ENCODE measurements at regions of chr9 and their contacts with region 1.

Region 1: GRCh38 chr9:18442629-18443491 is 31.1 kb upstream of the ADAMTSL1 start:
- DNase-seq: peak in 1 of 2 donors; percentile 83
- H3K4me3 ChIP-seq: peak overlapping the region in 1 of 2 donors; percentile 26
- H3K27ac ChIP-seq: peak overlapping the region; percentile 26 to 35
- H3K4me1 ChIP-seq: peaks cover 0 to 12% of the 10 kb centered on the region in 2 donors
- H3K27me3 ChIP-seq: no peaks in the 10 kb centered on the region
- CTCF ChIP-seq: peak; percentile 53 to 88 (median 88)

Region 2: DNA sequence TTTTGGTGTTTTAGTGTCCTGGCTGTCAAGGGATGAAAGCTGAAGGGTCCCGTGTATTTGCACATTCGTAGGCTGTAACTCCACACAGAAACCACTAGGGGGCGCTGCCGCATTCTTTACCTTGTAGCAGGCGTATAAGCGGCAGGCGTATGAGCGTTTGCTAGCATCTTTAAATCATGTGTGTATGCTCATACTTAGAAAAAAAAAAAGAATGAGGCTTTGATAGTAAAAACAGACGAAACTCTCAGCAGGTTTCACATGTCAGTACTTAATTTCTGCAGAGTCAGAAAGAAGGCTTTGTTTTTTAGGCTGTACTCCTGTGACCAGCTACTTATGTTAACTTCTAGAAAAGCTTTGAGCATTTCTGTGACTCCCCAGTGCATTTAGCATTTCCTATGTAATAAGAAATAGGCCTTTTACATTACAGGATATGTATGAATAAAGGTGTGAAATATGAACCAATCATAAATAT is 187.7 kb before region 1 on chr9:
- intact Hi-C with region 1: loop called (anchors 2 kb)
- DNase-seq: peak; percentile 16 to 81
- H3K4me3 ChIP-seq: no peak overlapping the region
- H3K27ac ChIP-seq: no peak overlapping the region
- H3K4me1 ChIP-seq: peaks cover 0 to 2% of the 10 kb centered on the region in 2 donors
- H3K27me3 ChIP-seq: no peaks in the 10 kb centered on the region
- CTCF ChIP-seq: peak; percentile 67 to 95 (median 95)

Region 3: DNA sequence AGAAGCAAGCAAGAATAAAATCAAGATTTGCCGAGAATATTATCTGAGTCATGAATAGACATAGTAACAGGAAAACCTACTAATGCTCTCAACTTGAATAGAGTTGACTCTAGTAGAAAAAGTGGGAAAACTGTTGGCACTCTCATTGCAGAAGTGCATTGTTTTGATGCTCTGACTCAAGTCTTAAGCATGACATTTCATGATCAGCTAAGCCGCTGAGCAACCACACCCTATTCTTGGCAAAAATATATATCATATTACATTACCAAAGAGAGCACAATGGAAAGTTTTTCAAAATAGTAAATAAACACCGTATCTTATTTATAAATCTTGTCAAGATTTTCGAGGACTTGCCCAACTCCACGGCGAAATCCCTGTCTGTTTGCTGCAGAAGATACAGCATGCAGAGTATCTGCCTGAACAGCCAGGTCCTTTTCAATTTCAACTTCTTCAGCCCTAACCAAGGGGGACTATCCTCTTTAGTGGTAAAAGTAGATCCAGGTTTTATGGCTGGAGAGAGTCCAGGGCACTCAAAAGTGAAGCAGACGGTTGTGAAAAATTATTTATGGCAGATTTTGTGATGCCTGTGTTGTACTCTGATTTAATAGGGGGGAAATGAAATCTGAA is 17.2 kb after region 1 on chr9:
- intact Hi-C with region 1: no loop called
- DNase-seq: no peak
- H3K4me3 ChIP-seq: no peak overlapping the region
- H3K27ac ChIP-seq: no peak overlapping the region
- H3K4me1 ChIP-seq: no peaks in the 10 kb centered on the region
- H3K27me3 ChIP-seq: no peaks in the 10 kb centered on the region
- CTCF ChIP-seq: no peak

Region 4: DNA sequence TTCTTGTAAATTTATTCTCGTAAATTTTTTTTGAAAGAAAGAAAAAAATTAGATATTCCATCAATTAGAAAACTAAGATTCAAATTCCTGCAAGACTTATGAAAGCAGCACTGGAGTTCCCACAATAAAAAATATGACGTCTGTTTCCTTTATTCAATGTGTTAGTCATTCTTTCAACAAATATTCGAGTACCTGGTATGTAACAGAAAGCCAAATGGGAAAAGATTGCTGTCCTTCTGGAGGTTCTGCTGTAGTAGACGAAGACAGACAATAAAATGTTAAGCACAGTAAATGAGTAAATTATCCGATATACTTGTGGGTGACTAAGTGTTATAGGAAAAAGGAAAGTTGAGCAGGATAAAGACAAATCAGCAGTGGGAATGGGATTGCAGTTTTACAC is 123.3 kb after region 1 on chr9:
- intact Hi-C with region 1: loop called (anchors 10 kb)
- DNase-seq: no peak
- H3K4me3 ChIP-seq: no peak overlapping the region
- H3K27ac ChIP-seq: peak overlapping the region; percentile 2 to 66
- H3K4me1 ChIP-seq: peaks cover 0 to 14% of the 10 kb centered on the region in 2 donors
- H3K27me3 ChIP-seq: no peaks in the 10 kb centered on the region
- CTCF ChIP-seq: no peak

Region 5: DNA sequence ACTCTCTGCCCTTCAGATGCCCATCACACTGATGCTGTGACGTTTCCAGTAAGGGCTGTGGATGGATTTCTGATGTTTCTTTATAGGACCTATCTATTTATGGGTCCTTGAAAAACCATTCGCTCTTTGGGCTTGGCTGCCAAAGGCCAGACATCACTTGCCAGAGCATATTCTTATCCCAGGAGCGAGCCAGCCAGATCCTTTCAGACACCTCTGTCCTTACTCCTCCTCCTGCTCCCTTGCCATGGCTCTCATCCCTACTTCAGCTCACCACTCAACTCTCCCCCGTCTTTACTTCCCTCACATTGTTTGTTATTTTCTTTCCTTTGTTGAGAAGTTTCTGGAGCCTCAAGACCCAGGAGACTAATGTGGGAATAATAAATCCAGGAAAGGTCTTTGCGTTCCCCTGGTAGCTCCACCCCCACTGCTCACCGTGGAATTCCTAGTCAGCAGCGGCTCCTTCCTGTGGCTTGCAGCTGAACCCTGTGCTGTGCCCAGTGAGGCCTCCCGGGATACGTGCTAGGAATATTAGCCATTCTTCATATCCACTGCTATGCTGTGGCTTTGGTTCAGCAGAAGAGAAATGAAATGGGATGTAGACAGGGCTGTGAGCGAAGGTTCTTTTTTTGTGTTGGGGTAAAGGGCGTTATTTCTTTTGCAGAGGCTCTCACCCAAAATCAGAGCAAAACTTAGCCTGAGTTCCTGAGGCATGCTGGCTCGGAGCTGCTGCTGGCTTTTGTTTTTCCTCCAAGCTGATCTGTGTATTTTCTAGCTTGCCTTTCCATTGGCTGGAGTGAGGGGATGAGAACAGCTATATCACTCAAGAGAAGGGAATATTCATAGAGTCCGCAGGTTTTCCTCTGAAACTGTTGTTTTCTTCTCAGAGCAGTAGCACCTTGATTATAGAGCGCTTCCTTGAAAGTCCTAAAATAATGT is 419.0 kb after region 1 on chr9:
- intact Hi-C with region 1: loop called (anchors 5 kb)
- DNase-seq: peak in 1 of 2 donors; percentile 78
- H3K4me3 ChIP-seq: peak overlapping the region; percentile 1 to 9
- H3K27ac ChIP-seq: peak overlapping the region; percentile 71 to 82
- H3K4me1 ChIP-seq: peaks cover 0 to 20% of the 10 kb centered on the region in 2 donors
- H3K27me3 ChIP-seq: no peaks in the 10 kb centered on the region
- CTCF ChIP-seq: peak in 1 of 3 experiments; percentile 43

Region 6: DNA sequence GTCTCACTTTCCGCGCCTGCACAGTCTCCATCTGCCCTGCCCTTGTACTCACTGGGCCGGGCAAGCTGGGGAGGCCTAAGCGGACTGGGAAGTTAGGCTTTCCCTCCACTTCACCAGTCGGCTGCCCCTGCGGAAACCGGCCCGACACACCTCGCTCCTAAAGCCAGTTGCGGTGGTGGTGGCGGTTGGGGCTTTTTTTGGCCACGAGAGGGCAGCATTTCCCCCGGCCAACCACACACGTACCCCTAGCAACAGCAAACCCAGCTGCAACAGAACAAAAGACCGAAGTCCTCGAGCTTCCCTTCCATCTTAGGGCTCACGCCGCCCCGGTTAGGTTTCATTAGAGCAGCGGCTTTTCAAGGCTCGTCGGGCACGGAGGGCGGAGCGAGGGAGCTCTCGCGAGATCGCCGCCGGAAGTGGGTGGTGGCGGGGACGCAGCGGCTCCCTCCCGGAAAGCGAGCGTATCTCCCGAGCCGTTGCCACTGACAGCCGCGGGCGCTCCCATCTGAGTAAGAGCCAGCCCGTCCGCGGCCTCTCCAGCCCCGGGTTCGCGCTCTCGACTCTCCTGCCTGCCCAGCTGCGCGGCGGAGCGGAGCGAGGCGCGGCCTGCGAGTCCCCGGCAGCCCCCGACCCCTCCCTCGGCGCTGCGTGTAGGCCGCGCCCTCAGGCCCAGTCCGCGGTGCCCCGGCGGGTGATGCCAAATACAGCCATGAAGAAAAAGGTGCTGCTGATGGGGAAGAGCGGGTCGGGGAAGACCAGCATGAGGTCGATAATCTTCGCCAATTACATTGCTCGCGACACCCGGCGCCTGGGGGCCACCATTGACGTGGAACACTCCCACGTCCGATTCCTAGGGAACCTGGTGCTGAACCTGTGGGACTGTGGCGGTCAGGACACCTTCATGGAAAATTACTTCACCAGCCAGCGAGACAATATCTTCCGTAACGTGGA is 606.4 kb after region 1 on chr9 and contains the start of gene RRAGA:
- intact Hi-C with region 1: loop called (anchors 2 kb)
- DNase-seq: peak; percentile 70 to 97
- H3K4me3 ChIP-seq: peak within 1 kb of the TSS; percentile 77 to 89
- H3K27ac ChIP-seq: peak within 1 kb of the TSS; percentile 98
- H3K4me1 ChIP-seq: peaks cover 8 to 14% of the 10 kb centered on the region in 2 donors
- H3K27me3 ChIP-seq: no peaks in the 10 kb centered on the region
- CTCF ChIP-seq: peak; percentile 81 to 87 (median 86)
- total RNA-seq, gene RRAGA: 57.3 TPM

Measured in ascending aorta (tissue), 2 donors.